HepG2 (cell line): ENCODE measurements at regions of chr20 and their contacts with region 1.

Region 1: DNA sequence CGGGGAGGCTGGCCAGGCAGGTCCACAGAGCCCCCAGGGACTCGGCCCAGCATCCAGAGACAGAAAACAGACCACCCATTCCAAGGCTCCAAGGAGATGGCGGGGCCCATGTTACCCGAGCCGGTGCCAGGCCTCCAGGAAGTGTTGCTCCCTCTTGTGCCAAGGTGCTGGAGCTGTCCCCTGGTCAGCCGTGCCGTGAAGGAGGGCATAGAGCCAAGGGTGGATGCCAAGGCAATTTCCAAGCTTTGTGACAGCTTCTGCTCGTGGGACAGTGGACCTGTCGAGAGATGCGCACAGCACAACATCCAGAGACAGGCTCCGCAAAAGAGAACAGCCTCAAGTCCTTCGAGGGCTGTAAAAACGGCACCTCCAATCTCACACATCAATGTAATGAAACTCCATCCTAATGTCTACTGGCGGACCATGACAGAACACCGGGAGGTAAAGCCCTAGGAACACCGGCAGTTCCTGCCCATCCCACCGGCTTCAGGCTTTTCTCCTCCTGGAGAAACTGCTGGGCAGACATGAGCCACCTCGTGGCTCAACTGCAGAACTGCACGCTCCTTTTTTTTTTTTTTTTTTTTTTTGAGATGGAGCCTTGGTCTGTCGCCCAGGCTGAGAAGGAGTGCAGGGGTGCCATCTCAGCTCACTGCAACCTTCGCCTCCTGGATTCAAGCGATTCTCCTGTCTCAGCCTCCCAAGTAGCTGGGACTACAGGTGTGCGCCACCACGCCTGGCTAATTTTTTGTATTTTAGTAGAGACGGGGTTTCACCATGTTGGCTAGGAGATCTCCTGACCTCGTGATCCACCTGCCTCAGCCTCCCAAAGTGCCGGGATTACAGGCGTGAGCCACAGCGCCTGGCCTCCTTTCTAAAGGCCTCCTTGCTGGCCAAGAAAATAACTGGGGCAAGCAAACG is 30.9 kb upstream of the AVP start:
- DNase-seq: peak; percentile 72
- ATAC-seq: peak; percentile 62
- H3K4me3 ChIP-seq: no peak overlapping the region
- H3K27ac ChIP-seq: no peak overlapping the region
- H3K4me1 ChIP-seq: peaks cover 45% of the 10 kb centered on the region
- H3K27me3 ChIP-seq: no peaks in the 10 kb centered on the region
- CTCF ChIP-seq: peak; percentile 89
- EP300 ChIP-seq: no peak
- POLR2A ChIP-seq: no peak
- RAD21 ChIP-seq: peak; percentile 74; the same call in 1 of the 2 replicates

Region 2: DNA sequence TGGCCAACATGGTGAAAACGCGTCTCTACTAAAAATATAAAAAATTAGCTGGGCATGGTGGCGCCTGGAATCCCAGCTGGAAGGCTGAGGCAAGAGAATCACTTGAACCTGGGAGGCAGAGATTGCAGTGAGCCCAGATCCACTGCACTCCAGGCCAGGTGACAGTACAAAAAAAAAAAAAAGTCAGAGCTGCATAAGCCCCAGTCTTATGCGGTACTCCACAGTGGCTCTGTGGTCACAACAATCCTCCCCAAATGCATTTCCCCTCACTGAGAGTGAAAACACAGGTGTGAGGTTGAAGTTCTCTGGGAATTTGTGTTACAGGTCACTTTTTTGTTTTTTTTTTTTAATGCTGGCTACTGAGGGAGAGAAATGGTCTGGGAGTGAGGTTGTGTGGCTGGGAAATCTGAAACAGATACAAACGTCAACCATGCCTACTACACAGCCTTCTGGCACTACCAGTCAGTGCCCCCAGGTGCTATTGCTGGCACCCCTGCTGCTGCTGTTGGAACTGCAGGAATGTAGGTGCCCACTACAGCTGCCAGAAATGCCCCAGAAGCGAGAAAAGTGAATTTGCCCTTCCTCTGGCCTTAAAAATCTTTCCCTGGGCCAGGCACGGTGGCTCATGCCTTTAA is 63.9 kb before region 1 on chr20:
- CTCF ChIA-PET with region 1: interaction called, 47 read pairs
- POLR2A ChIA-PET with region 1: no interaction called
- in situ Hi-C with region 1: loop called (anchors 10 kb)
- intact Hi-C with region 1: loop called (anchors 1 kb)
- DNase-seq: no peak
- ATAC-seq: peak; percentile 62
- H3K4me3 ChIP-seq: no peak overlapping the region
- H3K27ac ChIP-seq: peak overlapping the region; percentile 2
- H3K4me1 ChIP-seq: peaks cover 42% of the 10 kb centered on the region
- H3K27me3 ChIP-seq: no peaks in the 10 kb centered on the region; a peak in 1 of 5 replicates
- CTCF ChIP-seq: no peak
- EP300 ChIP-seq: no peak
- POLR2A ChIP-seq: no peak
- RAD21 ChIP-seq: no peak; the same call in 1 of the 2 replicates

Region 3: DNA sequence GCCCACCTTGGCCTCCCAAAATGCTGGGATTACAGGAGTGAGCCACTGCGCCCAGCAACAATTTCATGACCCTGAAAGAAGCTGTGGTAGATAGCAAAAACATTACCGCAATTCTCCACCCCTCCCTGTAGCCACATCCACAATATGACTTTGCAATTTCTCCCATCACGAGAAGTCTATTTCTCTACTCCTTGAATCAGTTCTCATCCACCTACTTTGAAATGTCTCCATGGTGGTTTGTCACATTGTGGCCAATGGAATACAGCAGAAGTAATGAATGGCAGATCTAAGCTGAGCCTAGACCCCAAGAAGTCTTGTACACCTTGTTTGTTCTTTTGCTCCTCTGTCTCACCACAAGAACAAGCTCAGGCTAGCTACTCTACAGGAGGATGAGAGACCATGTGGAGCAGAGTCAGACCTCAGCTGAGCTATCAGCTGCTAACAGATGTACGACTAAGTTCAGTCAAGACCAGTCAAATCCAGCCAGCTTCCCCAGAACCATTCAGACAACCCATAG is 37.8 kb before region 1 on chr20:
- CTCF ChIA-PET with region 1: interaction called, 4 read pairs
- POLR2A ChIA-PET with region 1: interaction called, 3 read pairs
- in situ Hi-C with region 1: no loop called
- intact Hi-C with region 1: loop called (anchors 5 kb)
- DNase-seq: no peak
- ATAC-seq: no peak
- H3K4me3 ChIP-seq: no peak overlapping the region
- H3K27ac ChIP-seq: no peak overlapping the region
- H3K4me1 ChIP-seq: peaks cover 66% of the 10 kb centered on the region
- H3K27me3 ChIP-seq: peaks cover 11 to 28% of the 10 kb centered on the region in 2 experiments; a peak in 4 of 5 replicates
- CTCF ChIP-seq: no peak
- EP300 ChIP-seq: no peak
- POLR2A ChIP-seq: no peak
- RAD21 ChIP-seq: no peak

Region 4: GRCh38 chr20:3102575-3103368 is 12.7 kb before region 1 on chr20:
- CTCF ChIA-PET with region 1: interaction called, 5 read pairs
- POLR2A ChIA-PET with region 1: no interaction called
- in situ Hi-C with region 1: no loop called
- intact Hi-C with region 1: loop called (anchors 1 kb)
- DNase-seq: no peak
- ATAC-seq: peak; percentile 2; the same call in 1 of the 3 replicates
- H3K4me3 ChIP-seq: no peak overlapping the region; a peak in 1 of 6 replicates
- H3K27ac ChIP-seq: peak overlapping the region; percentile 72
- H3K4me1 ChIP-seq: peaks cover 62% of the 10 kb centered on the region
- H3K27me3 ChIP-seq: no peaks in the 10 kb centered on the region
- CTCF ChIP-seq: no peak
- EP300 ChIP-seq: no peak
- POLR2A ChIP-seq: no peak
- RAD21 ChIP-seq: no peak

Region 5: DNA sequence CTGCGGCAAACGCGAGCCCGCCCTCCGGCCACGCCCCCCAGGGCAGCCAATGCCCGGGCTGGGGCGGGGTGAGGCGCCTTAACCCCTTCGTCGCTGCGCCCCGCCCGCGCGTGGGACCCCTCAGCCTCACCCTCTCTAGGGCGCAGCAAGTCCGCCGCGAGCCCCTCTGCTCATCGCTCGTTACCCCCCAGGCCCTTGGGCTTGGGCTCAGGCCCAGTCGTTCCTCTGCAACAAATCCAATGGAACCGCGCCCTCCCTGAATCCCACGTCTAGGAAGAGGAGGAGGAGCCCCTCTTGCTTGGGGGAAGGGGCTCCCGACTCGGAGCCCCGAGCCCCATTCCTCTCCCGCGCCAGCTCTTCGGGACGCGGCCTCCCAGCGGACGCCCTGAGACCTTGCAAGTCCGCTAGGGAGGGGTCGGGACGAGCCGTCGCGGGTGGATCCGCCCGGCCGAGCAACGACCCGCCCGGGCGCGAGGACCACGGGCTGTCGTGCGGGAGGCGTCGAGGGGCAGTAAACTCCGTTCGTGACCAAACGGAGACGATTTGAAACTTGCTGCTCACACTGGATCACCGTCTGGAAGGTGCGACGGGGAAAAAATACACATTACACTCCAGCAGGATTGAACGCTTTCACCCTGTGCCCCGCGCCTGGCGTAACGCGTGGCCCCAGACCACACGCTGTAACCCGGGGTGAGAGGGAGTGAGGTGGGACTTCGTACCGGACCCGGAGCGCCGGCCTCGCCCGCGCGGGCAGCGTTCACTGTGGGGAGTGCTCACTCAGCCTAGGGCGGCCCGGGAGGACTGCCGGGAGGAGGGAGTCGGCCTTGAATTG is 58.4 kb after region 1 on chr20:
- CTCF ChIA-PET with region 1: interaction called, 3 read pairs
- POLR2A ChIA-PET with region 1: no interaction called
- in situ Hi-C with region 1: no loop called
- intact Hi-C with region 1: loop called (anchors 1 kb)
- DNase-seq: peak; percentile 85
- ATAC-seq: peak; percentile 76
- H3K4me3 ChIP-seq: peak overlapping the region; percentile 85 to 99 (median 94)
- H3K27ac ChIP-seq: peak overlapping the region; percentile 92
- H3K4me1 ChIP-seq: peaks cover 54% of the 10 kb centered on the region
- H3K27me3 ChIP-seq: no peaks in the 10 kb centered on the region; a peak in 1 of 5 replicates
- CTCF ChIP-seq: peak; percentile 39; the same call in 1 of the 2 replicates
- EP300 ChIP-seq: peak in 1 of 2 experiments; percentile 42; a peak in 3 of 4 replicates
- POLR2A ChIP-seq: peak; percentile 81 to 82
- RAD21 ChIP-seq: peak; percentile 39; the same call in 1 of the 2 replicates

Region 6: GRCh38 chr20:3204124-3204822 is 88.8 kb after region 1 on chr20 and contains the start of gene DDRGK1:
- CTCF ChIA-PET with region 1: no interaction called
- POLR2A ChIA-PET with region 1: no interaction called
- in situ Hi-C with region 1: no loop called
- intact Hi-C with region 1: loop called (anchors 1 kb)
- DNase-seq: peak; percentile 85
- ATAC-seq: peak; percentile 84
- H3K4me3 ChIP-seq: peak within 1 kb of the TSS; percentile 76 to 98 (median 81)
- H3K27ac ChIP-seq: peak within 1 kb of the TSS; percentile 87
- H3K4me1 ChIP-seq: peaks cover 34% of the 10 kb centered on the region
- H3K27me3 ChIP-seq: peaks cover 0 to 6% of the 10 kb centered on the region in 2 experiments; a peak in 1 of 5 replicates
- CTCF ChIP-seq: peak; percentile 17; the same call in 1 of the 2 replicates
- EP300 ChIP-seq: no peak
- POLR2A ChIP-seq: peak; percentile 96
- RAD21 ChIP-seq: peak; percentile 73
- total RNA-seq, gene DDRGK1: 75.4 and 149 TPM in 2 replicates

Region 7: DNA sequence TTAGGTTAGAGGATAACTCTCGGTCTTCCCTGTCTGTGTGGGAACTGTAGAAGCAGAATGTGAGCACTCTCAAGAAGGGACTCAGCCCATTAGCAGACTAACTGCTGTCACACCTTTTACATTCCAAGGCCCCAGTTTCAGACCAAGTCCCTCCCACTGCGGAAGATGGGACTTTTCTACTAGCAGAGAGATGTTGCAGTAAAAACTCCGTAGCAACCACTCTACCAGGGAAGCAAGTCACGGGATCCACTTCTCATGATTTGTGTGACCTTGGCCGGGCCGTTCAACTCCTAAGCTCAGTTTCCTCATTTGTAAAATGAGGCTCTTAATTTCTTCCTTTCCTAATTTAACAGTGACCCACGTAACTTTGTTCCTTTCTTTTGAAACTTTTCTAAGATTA is 200.7 kb after region 1 on chr20:
- CTCF ChIA-PET with region 1: interaction called, 3 read pairs
- POLR2A ChIA-PET with region 1: no interaction called
- in situ Hi-C with region 1: no loop called
- intact Hi-C with region 1: loop called (anchors 1 kb)
- DNase-seq: no peak
- ATAC-seq: no peak
- H3K4me3 ChIP-seq: no peak overlapping the region
- H3K27ac ChIP-seq: no peak overlapping the region
- H3K4me1 ChIP-seq: peaks cover 13% of the 10 kb centered on the region
- H3K27me3 ChIP-seq: no peaks in the 10 kb centered on the region
- CTCF ChIP-seq: no peak
- EP300 ChIP-seq: no peak
- POLR2A ChIP-seq: no peak
- RAD21 ChIP-seq: no peak